Posterior vena cava (tissue), 2 donors: ENCODE measurements at regions of chr7 and their contacts with region 1.

Region 1: GRCh38 chr7:129825496-129826267 is 127.1 kb downstream of the UBE2H start:
- DNase-seq: peak; percentile 97

Region 2: GRCh38 chr7:129664029-129665012 is 161.4 kb before region 1 on chr7:
- intact Hi-C with region 1: loop called in 1 of 2 experiments (anchors 10 kb)
- DNase-seq: no peak

Region 3: GRCh38 chr7:129670656-129671055 is 155.0 kb before region 1 on chr7:
- intact Hi-C with region 1: loop called (anchors 10 kb)
- DNase-seq: no peak

Region 4: GRCh38 chr7:129780257-129780973 is 45.3 kb before region 1 on chr7:
- intact Hi-C with region 1: no loop called
- DNase-seq: peak; percentile 70

Region 5: DNA sequence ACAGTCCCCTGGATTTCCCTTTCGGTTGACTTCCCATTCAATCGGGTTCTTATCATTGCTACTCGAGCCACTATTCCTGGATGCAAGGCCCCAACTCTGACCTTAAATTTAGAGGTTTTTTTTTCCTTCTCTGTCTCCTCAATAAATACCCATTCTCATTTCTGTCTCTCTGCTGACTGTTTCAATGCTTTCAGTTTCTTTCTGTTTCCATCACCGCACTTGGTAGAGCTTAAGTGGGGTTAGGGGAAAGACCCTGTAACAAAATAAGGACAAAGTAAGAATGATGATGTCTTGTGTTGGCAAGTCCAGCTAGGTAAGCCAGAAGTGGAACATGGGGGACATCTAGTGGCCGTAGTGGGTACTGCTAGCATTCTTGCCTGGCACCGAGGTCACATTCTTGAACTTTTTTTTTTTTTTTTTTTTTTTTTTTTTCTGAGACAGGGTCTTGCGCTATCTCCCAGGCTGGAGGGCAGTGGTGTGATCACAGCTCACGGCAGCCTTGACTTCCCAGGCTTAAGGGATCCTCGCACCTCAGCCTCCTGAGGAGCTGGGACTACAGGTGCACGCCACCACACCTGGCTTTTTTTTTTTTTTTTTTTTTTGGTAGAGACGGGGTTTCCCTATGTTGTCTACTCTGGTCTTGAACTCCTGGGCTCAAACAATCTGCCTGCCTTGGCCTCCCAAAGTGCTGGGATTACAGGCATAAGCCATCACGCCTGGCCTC is 185.2 kb after region 1 on chr7:
- intact Hi-C with region 1: loop called in 1 of 2 experiments (anchors 5 kb)
- DNase-seq: peak; percentile 91

Region 6: GRCh38 chr7:130182990-130183389 is 357.3 kb after region 1 on chr7:
- intact Hi-C with region 1: no loop called
- DNase-seq: no peak